ENCODE measurements at regions of chr6 and their contacts with region 1.

Region 1: GRCh38 chr6:52162940-52163908 is 23.0 kb upstream of the IL17A start:
- DNase-seq: peak; percentile 47
- ATAC-seq: peak; percentile 83
- H3K4me3 ChIP-seq: no peak overlapping the region
- H3K27ac ChIP-seq: no peak overlapping the region
- H3K4me1 ChIP-seq: no peaks in the 10 kb centered on the region
- H3K27me3 ChIP-seq: 0 out of 2 replicates have a peak, but pooled peaks cover 2% of the 10 kb centered on the region
- CTCF ChIP-seq: peak; percentile 76; the same call in 1 of the 2 replicates

Region 2: GRCh38 chr6:51844336-51844735 is 318.9 kb before region 1 on chr6:
- CTCF ChIA-PET with region 1: no interaction called
- POLR2A ChIA-PET with region 1: no interaction called
- in situ Hi-C with region 1: no loop called
- intact Hi-C with region 1: no loop called
- DNase-seq: no peak
- ATAC-seq: no peak
- H3K4me3 ChIP-seq: no peak overlapping the region
- H3K27ac ChIP-seq: no peak overlapping the region
- H3K4me1 ChIP-seq: peaks cover 3% of the 10 kb centered on the region; the same call in 1 of the 2 replicates
- H3K27me3 ChIP-seq: no peaks in the 10 kb centered on the region
- CTCF ChIP-seq: peak; percentile 36

Region 3: DNA sequence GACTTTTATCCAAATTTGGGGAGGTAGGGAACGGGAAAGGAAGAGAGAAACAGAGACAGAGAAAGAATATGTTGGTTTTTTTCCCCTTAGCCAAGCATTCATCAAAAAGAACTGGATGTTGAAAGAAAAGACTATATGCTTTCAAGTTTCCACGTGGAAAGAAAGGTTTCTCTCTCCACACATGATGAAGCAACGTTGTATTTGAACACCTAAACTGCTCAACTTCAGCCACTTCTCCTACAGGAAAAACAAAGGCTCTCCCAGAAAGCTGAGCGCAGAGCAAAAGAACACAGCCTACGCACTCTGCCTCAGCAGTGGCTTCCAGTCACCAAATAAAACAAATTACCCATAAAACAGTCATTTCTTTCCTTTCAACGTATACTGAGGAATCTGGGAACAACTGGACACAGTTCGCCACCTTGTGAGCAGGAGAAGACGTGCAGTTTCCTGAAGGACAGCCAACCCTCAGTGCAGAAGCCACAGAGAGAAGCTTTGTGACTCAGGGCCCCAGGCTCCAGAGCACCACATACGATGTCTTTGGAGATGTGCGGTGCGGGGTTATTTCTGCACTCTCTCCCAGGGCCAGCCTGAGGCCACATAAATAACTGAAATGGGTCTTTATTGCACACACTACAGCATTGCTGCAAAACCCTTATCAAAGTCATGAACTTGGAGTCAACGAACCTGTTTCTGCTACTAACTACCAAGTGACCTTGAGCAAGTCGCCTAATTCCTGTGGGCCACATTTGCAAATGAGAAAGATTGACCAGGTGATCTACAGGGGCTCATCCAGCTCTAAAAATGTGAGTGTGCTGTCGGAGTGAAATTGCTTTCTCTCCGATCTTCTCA is 71.0 kb after region 1 on chr6:
- CTCF ChIA-PET with region 1: interaction called, 3 read pairs
- POLR2A ChIA-PET with region 1: no interaction called
- in situ Hi-C with region 1: no loop called
- intact Hi-C with region 1: loop called (anchors 1 kb)
- DNase-seq: peak; percentile 15
- ATAC-seq: peak; percentile 98
- H3K4me3 ChIP-seq: no peak overlapping the region
- H3K27ac ChIP-seq: no peak overlapping the region
- H3K4me1 ChIP-seq: no peaks in the 10 kb centered on the region; the same call in 1 of the 2 replicates
- H3K27me3 ChIP-seq: peaks cover 12% of the 10 kb centered on the region
- CTCF ChIP-seq: peak; percentile 79

Region 4: GRCh38 chr6:52263709-52264540 is 100.7 kb after region 1 on chr6:
- CTCF ChIA-PET with region 1: interaction called, 3 read pairs
- POLR2A ChIA-PET with region 1: no interaction called
- in situ Hi-C with region 1: no loop called
- intact Hi-C with region 1: loop called (anchors 5 kb)
- DNase-seq: peak; percentile 28
- ATAC-seq: peak; percentile 81
- H3K4me3 ChIP-seq: no peak overlapping the region
- H3K27ac ChIP-seq: no peak overlapping the region
- H3K4me1 ChIP-seq: no peaks in the 10 kb centered on the region
- H3K27me3 ChIP-seq: no peaks in the 10 kb centered on the region
- CTCF ChIP-seq: peak; percentile 95

Region 5: GRCh38 chr6:52352239-52353008 is 189.2 kb after region 1 on chr6:
- CTCF ChIA-PET with region 1: no interaction called
- POLR2A ChIA-PET with region 1: interaction called, 20 read pairs
- in situ Hi-C with region 1: no loop called
- intact Hi-C with region 1: no loop called
- DNase-seq: peak; percentile 96
- ATAC-seq: peak; percentile 97
- H3K4me3 ChIP-seq: peak overlapping the region in 1 of 2 experiments; percentile 21; a peak in 2 of 4 replicates
- H3K27ac ChIP-seq: peak overlapping the region; percentile 46
- H3K4me1 ChIP-seq: peaks cover 18% of the 10 kb centered on the region
- H3K27me3 ChIP-seq: no peaks in the 10 kb centered on the region
- CTCF ChIP-seq: no peak

Measured in Panc1 (cell line).